Natural killer cell (primary cell): ENCODE measurements at regions of chr6 and their contacts with region 1.

Region 1: DNA sequence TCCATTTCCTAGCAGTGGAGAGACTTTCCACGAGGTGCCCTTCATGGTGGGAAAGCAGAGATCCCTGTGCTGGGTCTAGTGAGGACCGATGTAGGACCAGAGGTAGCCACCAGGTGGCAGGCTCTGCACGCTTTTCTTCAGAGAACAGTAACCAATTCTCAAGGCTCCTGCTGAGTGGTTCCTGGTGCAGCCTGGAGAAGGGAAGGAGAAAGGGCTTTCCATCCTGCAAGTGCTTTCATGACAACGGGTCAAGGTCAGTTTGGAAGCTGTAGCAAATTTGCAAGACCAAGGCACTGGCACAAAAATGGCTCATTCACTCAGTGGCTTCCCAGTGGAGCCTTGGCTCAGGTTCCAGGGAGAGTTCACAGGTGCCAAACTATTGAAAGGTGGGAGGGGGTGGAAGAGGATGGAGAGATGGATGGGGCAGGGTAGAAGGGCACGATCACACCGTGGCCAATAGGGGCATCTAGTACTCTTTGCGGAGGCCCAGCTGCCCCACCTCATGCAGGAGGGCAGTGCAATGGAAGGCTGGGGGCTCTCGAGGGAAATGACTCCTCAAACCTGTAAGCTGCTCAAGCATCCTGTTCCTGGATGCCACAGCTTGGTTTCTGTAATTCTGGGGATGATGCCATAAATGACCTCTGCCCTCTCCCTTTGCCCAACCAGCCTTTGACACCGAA is 25.5 kb upstream of the KCNK16 start:
- DNase-seq: peak; percentile 50 to 66
- ATAC-seq: peak; percentile 65 to 84 (median 81)
- H3K4me3 ChIP-seq: no peak overlapping the region
- H3K4me3 Mint-ChIP-seq: no peak overlapping the region
- H3K27ac ChIP-seq: no peak overlapping the region
- H3K27ac Mint-ChIP-seq: peak overlapping the region in 1 of 2 donors; percentile 53
- H3K4me1 ChIP-seq: peaks cover 7% of the 10 kb centered on the region
- H3K4me1 Mint-ChIP-seq: peaks cover 0 to 10% of the 10 kb centered on the region in 2 donors
- H3K27me3 ChIP-seq: no peaks in the 10 kb centered on the region
- H3K27me3 Mint-ChIP-seq: no peaks in the 10 kb centered on the region
- CTCF ChIP-seq: peak; percentile 88

Region 2: DNA sequence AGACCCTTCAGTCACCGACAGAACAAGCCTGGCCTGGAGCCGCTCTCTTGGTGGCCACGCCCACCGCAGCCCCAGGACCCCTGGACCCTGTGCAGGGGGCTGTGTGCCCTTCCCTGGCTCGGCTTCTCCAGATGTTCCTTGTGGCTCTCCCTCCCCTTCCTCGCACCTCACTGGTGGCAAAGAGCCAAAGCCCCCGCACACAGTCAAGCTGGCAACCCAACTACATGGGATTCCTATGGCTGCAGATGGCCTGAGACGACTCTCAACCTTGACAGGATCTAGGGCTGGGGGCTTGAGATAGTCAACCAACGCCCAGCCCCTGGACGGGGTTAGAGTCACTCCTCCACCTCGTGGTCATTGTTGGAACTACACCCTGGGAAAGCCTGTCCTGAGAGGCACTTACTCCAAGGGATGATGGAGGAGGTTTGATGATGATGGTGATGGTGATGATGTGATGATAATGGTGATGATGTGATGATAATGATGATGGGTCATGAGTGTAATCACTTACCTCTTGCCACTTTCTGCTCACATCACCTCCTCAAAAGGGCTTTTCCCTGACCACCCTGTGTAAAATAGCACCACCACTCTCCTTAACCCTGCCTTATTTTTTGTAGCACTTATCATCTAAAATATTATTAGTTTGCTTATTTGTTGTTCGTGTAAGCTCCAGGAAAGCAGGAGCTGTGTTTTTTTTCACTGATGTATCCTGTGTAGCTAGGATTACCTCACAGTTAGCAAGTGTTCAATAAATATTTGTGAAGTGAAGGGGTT is 960.7 kb after region 1 on chr6:
- intact Hi-C with region 1: loop called (anchors 2 kb)
- DNase-seq: peak; percentile 29 to 60
- ATAC-seq: peak; percentile 63 to 83 (median 63)
- H3K4me3 ChIP-seq: no peak overlapping the region
- H3K4me3 Mint-ChIP-seq: no peak overlapping the region
- H3K27ac ChIP-seq: no peak overlapping the region
- H3K27ac Mint-ChIP-seq: no peak overlapping the region
- H3K4me1 ChIP-seq: peaks cover 3% of the 10 kb centered on the region
- H3K4me1 Mint-ChIP-seq: peaks cover 0 to 6% of the 10 kb centered on the region in 2 donors
- H3K27me3 ChIP-seq: peaks cover 6% of the 10 kb centered on the region
- H3K27me3 Mint-ChIP-seq: peaks cover 39 to 48% of the 10 kb centered on the region in 2 donors
- CTCF ChIP-seq: peak; percentile 79